PC-9 (cell line): ENCODE measurements at regions of chr17 and their contacts with region 1.

Region 1: GRCh38 chr17:63478791-63479494 is 2.1 kb downstream of the ACE start:
- DNase-seq: peak; percentile 85 to 88
- H3K4me3 ChIP-seq: no peak overlapping the region
- H3K27ac ChIP-seq: no peak overlapping the region
- H3K4me1 ChIP-seq: peaks cover 5% of the 10 kb centered on the region
- H3K27me3 ChIP-seq: peaks cover 22% of the 10 kb centered on the region
- CTCF ChIP-seq: peak; percentile 83

Region 2: DNA sequence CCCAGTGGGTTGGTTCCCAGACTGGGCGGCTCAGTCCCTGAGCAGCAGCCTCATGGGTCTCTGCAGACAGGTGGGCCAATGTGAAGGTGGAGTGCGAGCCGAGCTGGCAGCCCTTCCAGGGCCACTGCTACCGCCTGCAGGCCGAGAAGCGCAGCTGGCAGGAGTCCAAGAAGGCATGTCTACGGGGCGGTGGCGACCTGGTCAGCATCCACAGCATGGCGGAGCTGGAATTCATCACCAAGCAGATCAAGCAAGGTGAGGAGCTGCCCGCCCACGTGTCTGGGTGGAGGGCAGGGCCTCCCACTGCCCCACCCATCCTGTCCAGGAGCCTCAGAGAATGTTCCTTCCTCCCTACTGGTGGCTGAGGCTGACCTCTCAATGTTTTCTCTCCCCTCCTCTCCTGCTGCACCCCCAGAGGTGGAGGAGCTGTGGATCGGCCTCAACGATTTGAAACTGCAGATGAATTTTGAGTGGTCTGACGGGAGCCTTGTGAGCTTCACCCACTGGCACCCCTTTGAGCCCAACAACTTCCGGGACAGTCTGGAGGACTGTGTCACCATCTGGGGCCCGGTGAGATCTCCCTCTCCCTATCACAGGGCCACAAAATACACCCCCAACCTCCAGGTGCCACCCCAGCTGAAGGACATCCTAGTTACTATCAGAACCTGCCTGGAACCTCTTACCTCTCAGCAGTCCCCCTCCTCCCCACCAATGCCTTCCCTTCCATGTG is 807.2 kb before region 1 on chr17:
- CTCF ChIA-PET with region 1: interaction called, 6 read pairs
- POLR2A ChIA-PET with region 1: no interaction called
- intact Hi-C with region 1: loop called (anchors 5 kb)
- DNase-seq: peak in 1 of 2 experiments; percentile 50
- H3K4me3 ChIP-seq: no peak overlapping the region
- H3K27ac ChIP-seq: no peak overlapping the region
- H3K4me1 ChIP-seq: no peaks in the 10 kb centered on the region
- H3K27me3 ChIP-seq: no peaks in the 10 kb centered on the region
- CTCF ChIP-seq: no peak

Region 3: DNA sequence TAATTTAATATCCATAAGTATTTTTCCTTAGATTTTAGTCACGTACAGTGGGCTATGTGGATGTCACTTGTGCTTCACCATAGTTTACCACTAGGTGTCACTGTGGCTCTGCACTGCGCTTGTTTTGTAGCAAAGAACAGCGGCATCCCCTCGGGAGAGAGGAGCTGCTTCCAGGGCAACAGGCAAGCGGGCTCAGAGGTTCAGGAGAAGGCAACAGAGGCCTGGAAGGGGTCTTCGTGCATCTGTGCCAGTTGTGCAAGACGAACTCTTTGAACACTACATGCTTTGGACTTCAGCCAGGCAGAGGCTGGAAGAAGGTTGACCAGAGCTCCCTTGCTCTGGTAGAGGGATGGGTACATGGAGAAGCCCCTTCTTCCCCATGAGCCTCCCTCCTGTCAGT is 53.5 kb before region 1 on chr17:
- CTCF ChIA-PET with region 1: interaction called, 14 read pairs
- POLR2A ChIA-PET with region 1: no interaction called
- intact Hi-C with region 1: loop called (anchors 1 kb)
- DNase-seq: peak in 1 of 2 experiments; percentile 66
- H3K4me3 ChIP-seq: no peak overlapping the region
- H3K27ac ChIP-seq: no peak overlapping the region
- H3K4me1 ChIP-seq: no peaks in the 10 kb centered on the region
- H3K27me3 ChIP-seq: no peaks in the 10 kb centered on the region
- CTCF ChIP-seq: peak; percentile 96

Region 4: GRCh38 chr17:63434876-63435684 is 43.9 kb before region 1 on chr17:
- CTCF ChIA-PET with region 1: interaction called, 5 read pairs
- POLR2A ChIA-PET with region 1: no interaction called
- intact Hi-C with region 1: loop called (anchors 2 kb)
- DNase-seq: peak; percentile 68 to 89
- H3K4me3 ChIP-seq: no peak overlapping the region
- H3K27ac ChIP-seq: no peak overlapping the region
- H3K4me1 ChIP-seq: peaks cover 11% of the 10 kb centered on the region
- H3K27me3 ChIP-seq: no peaks in the 10 kb centered on the region
- CTCF ChIP-seq: no peak; the same call in 1 of the 2 replicates

Region 5: DNA sequence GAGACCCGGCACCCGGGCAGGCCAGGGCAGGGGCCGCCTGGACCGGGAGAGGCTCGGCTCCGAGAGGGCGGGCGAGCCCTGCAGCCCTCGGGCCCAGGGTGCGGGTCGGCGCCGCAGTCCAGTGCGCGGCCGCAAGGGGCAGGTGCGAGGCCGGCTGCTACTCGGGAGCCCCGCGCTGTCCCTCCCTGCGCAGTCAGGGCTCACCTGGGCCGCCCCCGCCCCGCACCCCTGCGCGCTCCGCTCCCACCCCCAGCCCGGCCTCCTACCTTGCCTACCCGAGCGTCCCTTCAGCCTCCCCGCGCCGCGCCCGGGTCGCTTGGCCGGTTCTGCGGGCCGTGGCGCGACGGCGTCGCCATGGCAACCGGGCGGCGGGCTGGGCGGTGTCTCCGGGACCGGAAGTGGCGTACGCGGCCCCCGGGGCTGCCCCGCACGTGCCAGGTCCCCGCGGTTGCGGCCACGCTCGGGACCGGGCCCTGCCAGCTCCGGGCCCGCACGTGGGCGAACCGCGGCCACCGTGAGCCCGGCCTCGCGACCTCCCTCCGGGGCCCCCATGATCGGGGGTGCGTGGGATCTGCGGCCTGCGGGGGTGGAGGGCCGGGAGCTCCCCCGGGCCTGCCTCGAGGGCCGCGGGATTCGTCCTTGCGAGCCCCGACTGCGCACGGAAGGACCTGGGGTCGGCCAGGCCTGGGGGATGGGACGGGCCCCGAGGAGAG is 32.8 kb before region 1 on chr17 and contains the start of gene CYB561:
- CTCF ChIA-PET with region 1: interaction called, 6 read pairs
- POLR2A ChIA-PET with region 1: interaction called, 4 read pairs
- intact Hi-C with region 1: loop called (anchors 2 kb)
- DNase-seq: peak; percentile 69 to 93
- H3K4me3 ChIP-seq: peak within 1 kb of the TSS; percentile 67
- H3K27ac ChIP-seq: peak within 1 kb of the TSS; percentile 94
- H3K4me1 ChIP-seq: peaks cover 21% of the 10 kb centered on the region
- H3K27me3 ChIP-seq: no peaks in the 10 kb centered on the region
- CTCF ChIP-seq: peak; percentile 59; the same call in 1 of the 2 replicates
- total RNA-seq, gene CYB561: 61.6 and 71.6 TPM in 2 replicates

Region 6: DNA sequence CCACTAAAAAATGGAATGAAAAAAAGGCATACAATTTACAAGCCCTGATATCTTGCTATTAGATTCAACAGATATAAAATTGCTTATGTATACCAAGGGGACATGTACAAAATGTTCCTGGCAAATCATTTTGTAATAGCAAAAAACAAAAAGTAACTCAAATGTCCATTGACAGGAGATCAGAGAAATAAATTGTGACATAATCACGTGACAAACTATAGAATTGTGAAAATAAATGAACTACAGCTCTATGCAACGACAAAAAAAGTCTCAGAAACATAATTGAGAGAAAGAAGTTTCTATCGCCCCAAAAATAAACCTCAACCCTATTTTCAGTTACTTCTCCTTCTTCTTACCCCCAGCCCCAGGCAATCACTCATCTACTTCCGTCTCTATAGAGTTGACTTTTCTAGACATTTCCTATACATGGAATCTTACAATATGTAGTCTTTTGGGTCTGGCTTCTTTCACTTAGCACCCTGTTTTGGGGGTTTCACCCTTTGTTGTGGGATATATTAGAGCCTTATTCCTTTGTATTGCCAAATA is 14.2 kb before region 1 on chr17:
- CTCF ChIA-PET with region 1: interaction called, 10 read pairs
- POLR2A ChIA-PET with region 1: no interaction called
- intact Hi-C with region 1: no loop called
- DNase-seq: no peak
- H3K4me3 ChIP-seq: no peak overlapping the region
- H3K27ac ChIP-seq: no peak overlapping the region
- H3K4me1 ChIP-seq: peaks cover 29% of the 10 kb centered on the region
- H3K27me3 ChIP-seq: peaks cover 6% of the 10 kb centered on the region; the same call in 1 of the 2 replicates
- CTCF ChIP-seq: no peak

Region 7: GRCh38 chr17:63523253-63523855 is 44.4 kb after region 1 on chr17 and contains the start of gene KCNH6:
- CTCF ChIA-PET with region 1: no interaction called
- POLR2A ChIA-PET with region 1: no interaction called
- intact Hi-C with region 1: no loop called
- DNase-seq: no peak
- H3K4me3 ChIP-seq: no peak within 1 kb of the TSS
- H3K27ac ChIP-seq: no peak within 1 kb of the TSS
- H3K4me1 ChIP-seq: no peaks in the 10 kb centered on the region
- H3K27me3 ChIP-seq: peaks cover 73% of the 10 kb centered on the region
- CTCF ChIP-seq: no peak
- total RNA-seq, gene KCNH6: not detected in 2 replicates